Head of caudate nucleus (tissue), 42 donors: ENCODE measurements at regions of chr12 and their contacts with region 1.

Region 1: DNA sequence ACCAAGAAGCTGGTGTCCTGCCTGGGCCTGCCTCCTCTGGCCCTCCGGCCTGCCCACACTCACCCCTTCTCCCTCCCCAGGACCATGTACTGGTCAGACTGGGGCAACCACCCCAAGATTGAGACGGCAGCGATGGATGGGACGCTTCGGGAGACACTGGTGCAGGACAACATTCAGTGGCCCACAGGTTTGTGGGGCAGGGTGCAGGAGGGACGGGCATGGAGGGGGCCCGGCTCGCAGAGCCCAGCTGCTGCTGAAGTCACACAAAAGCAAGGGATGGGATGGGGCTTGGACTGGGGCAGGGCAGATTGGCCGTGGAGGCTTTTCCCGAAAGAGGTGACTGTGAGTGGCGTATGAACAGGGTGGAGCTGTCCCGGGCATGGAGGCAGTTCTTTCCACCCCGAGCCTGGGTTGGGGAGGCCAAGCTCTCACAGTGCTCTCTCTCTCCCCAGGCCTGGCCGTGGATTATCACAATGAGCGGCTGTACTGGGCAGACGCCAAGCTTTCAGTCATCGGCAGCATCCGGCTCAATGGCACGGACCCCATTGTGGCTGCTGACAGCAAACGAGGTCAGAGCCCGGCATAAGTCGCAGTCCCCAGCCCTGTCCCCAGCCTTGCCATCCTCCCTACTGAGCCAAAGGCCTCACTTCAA is 7.8 kb upstream of the NXPH4 start:
- DNase-seq: peak; percentile 51 to 95 (median 80)

Region 2: DNA sequence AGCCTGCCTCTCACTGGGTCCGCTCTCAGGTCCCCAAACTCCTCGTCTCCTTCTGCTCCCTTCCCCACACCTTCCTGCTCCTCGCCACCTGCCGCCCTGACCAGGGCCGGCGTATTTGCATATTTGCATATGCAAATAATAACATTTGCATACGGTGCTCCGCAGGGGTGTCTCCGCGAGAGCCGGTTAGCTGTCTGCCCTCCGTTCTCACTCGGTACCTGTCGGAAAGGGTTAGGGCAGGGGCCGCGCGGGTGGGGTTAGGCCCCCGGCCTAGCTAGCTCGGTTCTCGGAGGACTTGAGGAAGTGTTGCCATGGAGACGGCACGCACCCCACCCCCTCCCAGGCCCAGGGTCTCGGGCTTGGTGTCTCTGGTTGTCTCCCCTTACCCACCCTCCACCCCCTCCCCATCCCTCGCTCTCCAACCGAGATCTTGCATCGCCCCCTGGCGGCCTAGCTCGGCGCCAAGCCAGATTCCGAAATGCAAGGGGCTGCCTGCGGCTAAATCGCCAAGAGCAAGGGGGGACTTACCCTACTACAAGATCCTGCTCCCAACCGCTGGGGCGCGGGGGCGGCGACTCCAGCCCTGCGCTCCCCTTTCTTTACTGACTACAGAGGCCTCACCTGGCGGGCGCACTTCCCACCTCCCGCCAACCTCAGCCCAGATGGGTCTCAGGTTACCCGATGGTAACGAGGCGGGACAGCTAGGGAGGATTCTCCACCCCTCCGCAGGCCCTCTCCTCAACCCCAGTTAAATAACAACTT is 34.1 kb after region 1 on chr12:
- intact Hi-C with region 1: loop called (anchors 5 kb)
- DNase-seq: peak in 34 of 42 donors; percentile 34 to 79 (median 62)